Mucosa of descending colon (tissue), 3 donors: ENCODE measurements at regions of chr6 and their contacts with region 1.

Region 1: GRCh38 chr6:164533069-164533362 is 776.4 kb downstream of the C6orf118 start:
- DNase-seq: no peak
- ATAC-seq: no peak
- H3K4me3 ChIP-seq: no peak overlapping the region
- H3K4me1 ChIP-seq: no peaks in the 10 kb centered on the region
- CTCF ChIP-seq: no peak

Region 2: GRCh38 chr6:164570801-164571200 is 37.8 kb after region 1 on chr6:
- intact Hi-C with region 1: loop called in 1 of 2 experiments (anchors 2 kb)
- DNase-seq: no peak
- ATAC-seq: no peak
- H3K4me3 ChIP-seq: no peak overlapping the region
- H3K4me1 ChIP-seq: no peaks in the 10 kb centered on the region
- CTCF ChIP-seq: no peak

Region 3: GRCh38 chr6:164660781-164661180 is 127.8 kb after region 1 on chr6:
- intact Hi-C with region 1: no loop called
- DNase-seq: no peak
- ATAC-seq: no peak
- H3K4me3 ChIP-seq: no peak overlapping the region
- H3K4me1 ChIP-seq: no peaks in the 10 kb centered on the region
- CTCF ChIP-seq: no peak

Region 4: GRCh38 chr6:165173484-165173883 is 640.5 kb after region 1 on chr6:
- intact Hi-C with region 1: no loop called
- DNase-seq: no peak
- ATAC-seq: no peak
- H3K4me3 ChIP-seq: no peak overlapping the region
- H3K4me1 ChIP-seq: no peaks in the 10 kb centered on the region
- CTCF ChIP-seq: no peak